Activated CD8-positive, alpha-beta memory T cell treated with anti-CD3 and anti-CD28 coated beads, Interleukin-2, amount 10 ng/mL, durations not matched to agents 7 days and 5 days (primary cell): ENCODE measurements at regions of chr6 and their contacts with region 1.

Region 1: GRCh38 chr6:33607784-33608161 is 13.3 kb upstream of the ITPR3 start:
- DNase-seq: peak; percentile 65
- ATAC-seq: peak; percentile 78
- H3K4me3 Mint-ChIP-seq: no peak overlapping the region
- H3K27ac Mint-ChIP-seq: no peak overlapping the region
- H3K4me1 Mint-ChIP-seq: peaks cover 2% of the 10 kb centered on the region
- H3K27me3 Mint-ChIP-seq: peaks cover 19% of the 10 kb centered on the region

Region 2: GRCh38 chr6:33585403-33586107 is 22.2 kb before region 1 on chr6:
- CTCF ChIA-PET with region 1: interaction called, 52 read pairs
- DNase-seq: peak; percentile 96
- ATAC-seq: peak; percentile 89
- H3K4me3 Mint-ChIP-seq: peak overlapping the region; percentile 75
- H3K27ac Mint-ChIP-seq: peak overlapping the region; percentile 94
- H3K4me1 Mint-ChIP-seq: peaks cover 37% of the 10 kb centered on the region
- H3K27me3 Mint-ChIP-seq: no peaks in the 10 kb centered on the region

Region 3: GRCh38 chr6:33592411-33593054 is 15.2 kb before region 1 on chr6:
- CTCF ChIA-PET with region 1: interaction called, 52 read pairs
- DNase-seq: no peak
- ATAC-seq: peak; percentile 16
- H3K4me3 Mint-ChIP-seq: peak overlapping the region; percentile 50
- H3K27ac Mint-ChIP-seq: no peak overlapping the region
- H3K4me1 Mint-ChIP-seq: peaks cover 38% of the 10 kb centered on the region
- H3K27me3 Mint-ChIP-seq: peaks cover 3% of the 10 kb centered on the region